AG04450 (cell line): ENCODE measurements at regions of chr10 and their contacts with region 1.

Region 1: DNA sequence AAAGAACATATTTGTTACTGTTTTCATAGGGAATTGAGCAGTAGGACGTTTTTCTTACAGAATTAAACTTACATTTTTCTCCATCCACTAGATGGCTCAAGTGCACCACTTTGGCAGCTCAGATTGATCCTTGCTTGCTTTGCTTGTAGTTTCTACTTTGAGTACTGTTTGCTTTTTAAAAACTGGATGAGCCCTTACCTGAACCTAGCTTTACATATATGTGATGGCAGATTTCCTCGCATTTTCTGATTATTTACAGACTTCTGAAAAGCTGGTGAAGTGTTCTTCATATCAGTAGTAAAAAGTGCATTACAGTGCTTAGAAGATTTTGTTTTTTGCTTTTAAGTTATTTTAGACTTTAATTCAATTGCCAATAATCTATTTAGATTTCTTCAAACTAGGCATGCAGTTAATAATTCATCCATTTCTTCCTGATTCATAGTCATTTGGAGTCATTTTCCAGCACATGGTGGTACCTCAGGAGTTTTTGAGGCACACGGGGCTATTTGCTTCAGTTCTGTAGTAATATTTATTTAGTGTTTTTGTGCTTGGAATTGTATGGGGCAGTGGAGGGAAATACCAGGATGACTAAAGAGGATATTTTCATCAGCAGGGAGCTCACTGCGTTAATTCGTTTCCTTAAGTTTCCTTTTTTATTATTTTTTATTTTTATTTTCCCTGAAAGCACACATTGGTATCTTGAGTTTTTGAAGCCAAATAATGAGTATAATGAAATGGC is 57.3 kb downstream of the MAPK8 start:
- DNase-seq: peak; percentile 51
- H3K4me3 ChIP-seq: no peak overlapping the region
- H3K27ac ChIP-seq: no peak overlapping the region
- H3K27me3 ChIP-seq: no peaks in the 10 kb centered on the region
- CTCF ChIP-seq: peak; percentile 80

Region 2: DNA sequence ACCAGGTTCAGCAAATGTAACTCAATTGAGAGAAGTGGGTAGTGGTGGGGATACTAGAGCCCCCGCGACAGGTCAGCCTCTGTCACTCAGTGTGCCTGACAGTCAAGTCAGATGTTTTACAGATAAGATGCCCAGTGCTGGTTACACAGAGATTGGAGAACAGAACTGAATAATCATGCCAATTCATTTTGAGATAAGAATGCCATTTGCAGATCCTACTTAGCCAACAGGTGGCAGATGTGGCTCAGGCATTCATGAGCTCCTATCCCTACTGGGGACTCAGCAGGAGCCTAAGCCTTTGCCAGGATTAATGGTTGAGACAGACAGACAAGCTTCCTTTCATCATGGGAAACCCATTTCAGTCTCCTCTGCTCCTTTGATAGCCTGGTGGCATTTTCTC is 80.5 kb after region 1 on chr10:
- CTCF ChIA-PET with region 1: interaction called, 6 read pairs
- POLR2A ChIA-PET with region 1: interaction called, 10 read pairs
- DNase-seq: no peak
- H3K4me3 ChIP-seq: no peak overlapping the region
- H3K27ac ChIP-seq: no peak overlapping the region
- H3K27me3 ChIP-seq: no peaks in the 10 kb centered on the region
- CTCF ChIP-seq: peak; percentile 39

Region 3: DNA sequence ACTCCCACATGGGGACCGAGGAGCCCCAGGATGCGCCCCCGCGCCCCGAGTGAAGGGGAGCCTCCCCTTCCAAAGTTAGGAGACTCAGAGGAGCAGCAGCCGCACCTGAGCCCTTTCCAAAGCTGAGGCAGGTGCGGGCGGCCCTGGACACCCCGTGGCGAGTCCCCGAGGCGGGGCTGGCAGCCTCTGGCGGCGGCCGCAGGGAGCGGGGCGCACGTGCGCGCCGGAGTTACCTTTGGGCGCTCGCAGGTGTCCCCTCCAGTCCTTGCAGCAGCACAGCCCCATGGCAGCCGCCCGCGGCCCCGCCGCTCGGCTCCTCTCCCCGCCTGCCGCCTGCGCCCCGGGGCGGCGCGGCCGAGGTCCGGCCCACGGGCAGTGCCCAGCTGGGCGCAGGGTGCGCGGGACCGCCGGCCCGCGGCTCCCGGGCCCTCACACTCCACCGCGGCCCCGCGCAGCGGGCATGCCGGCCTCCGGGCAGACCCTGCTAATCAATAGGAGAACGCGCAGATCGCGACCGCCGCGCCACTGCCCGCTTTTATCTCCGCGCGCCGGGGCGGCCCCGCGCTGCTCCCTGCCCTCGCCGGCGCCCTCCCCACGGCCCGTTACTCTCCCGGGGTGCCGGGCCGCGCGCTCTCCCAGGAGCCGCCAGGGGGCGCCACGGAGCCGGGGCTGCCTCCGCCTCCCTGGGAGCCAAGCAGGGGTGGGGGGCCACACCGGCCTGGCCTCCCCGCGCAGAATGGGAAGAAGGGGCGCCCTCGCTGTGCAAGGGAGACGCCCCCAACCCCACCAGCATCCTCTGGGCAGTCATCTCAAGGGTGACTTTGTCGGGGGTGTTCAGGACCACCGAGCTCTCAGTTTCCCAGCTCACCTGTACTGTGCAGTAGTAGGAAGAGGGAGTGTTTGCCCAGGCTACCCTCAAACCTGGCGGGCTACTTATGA is 160.3 kb after region 1 on chr10:
- CTCF ChIA-PET with region 1: interaction called, 15 read pairs
- POLR2A ChIA-PET with region 1: no interaction called
- DNase-seq: no peak
- H3K4me3 ChIP-seq: peak overlapping the region; percentile 58
- H3K27ac ChIP-seq: no peak overlapping the region
- H3K27me3 ChIP-seq: no peaks in the 10 kb centered on the region
- CTCF ChIP-seq: peak; percentile 45; the same call in 1 of the 2 replicates

Region 4: DNA sequence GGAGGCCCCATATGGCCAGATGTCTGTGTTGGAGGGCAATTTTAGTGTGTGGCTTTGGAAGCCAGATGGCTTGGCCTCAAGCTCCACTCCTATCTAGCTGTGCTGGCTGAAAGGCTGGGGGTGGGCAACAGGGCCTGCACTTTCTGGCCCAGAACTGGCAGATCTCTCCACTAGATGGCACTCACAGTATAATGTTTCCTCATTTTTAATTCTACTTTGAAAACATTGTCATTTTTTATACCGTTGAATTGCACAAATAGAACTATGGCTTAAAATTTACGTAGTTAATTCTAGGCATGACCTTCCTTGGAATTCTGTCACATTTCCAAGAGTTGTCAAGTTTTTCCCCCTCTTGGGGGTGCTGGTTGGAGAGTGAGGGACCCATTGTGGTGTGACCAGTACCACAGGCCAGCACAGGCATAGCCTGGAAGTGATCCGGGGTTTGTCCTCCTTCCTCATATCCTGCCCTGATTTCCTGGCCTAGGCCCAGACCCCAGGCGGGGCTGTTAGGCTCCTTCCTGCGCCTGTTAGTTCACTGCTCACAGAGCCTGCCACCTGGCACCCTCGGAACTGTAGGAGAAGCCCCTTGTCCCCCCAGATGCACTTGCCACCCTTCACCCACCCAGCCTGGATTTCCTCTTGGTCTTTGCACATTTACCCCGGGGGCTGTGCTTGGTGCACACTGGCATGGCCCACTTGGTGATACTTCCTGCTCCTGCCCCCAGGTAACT is 188.2 kb after region 1 on chr10:
- CTCF ChIA-PET with region 1: interaction called, 19 read pairs
- POLR2A ChIA-PET with region 1: no interaction called
- DNase-seq: peak; percentile 29
- H3K4me3 ChIP-seq: no peak overlapping the region
- H3K27ac ChIP-seq: no peak overlapping the region
- H3K27me3 ChIP-seq: no peaks in the 10 kb centered on the region
- CTCF ChIP-seq: peak; percentile 74